ENCODE measurements at regions of chr15 and their contacts with region 1.

Region 1: GRCh38 chr15:63157118-63157843 is at the start of gene RPS27L:
- DNase-seq: peak; percentile 77
- ATAC-seq: peak; percentile 95
- H3K4me3 ChIP-seq: peak within 1 kb of the TSS; percentile 78
- H3K27ac ChIP-seq: peak within 1 kb of the TSS; percentile 96
- H3K4me1 ChIP-seq: peaks cover 10% of the 10 kb centered on the region
- H3K27me3 ChIP-seq: no peaks in the 10 kb centered on the region
- CTCF ChIP-seq: no peak
- EP300 ChIP-seq: peak; percentile 39 to 56; a peak in 2 of 4 replicates
- POLR2A ChIP-seq: peak; percentile 99
- RAD21 ChIP-seq: 0 out of 2 replicates have a peak, but pooled peaks have one; percentile 5
- polyA plus RNA-seq, gene RPS27L: 468 to 596 TPM

Region 2: DNA sequence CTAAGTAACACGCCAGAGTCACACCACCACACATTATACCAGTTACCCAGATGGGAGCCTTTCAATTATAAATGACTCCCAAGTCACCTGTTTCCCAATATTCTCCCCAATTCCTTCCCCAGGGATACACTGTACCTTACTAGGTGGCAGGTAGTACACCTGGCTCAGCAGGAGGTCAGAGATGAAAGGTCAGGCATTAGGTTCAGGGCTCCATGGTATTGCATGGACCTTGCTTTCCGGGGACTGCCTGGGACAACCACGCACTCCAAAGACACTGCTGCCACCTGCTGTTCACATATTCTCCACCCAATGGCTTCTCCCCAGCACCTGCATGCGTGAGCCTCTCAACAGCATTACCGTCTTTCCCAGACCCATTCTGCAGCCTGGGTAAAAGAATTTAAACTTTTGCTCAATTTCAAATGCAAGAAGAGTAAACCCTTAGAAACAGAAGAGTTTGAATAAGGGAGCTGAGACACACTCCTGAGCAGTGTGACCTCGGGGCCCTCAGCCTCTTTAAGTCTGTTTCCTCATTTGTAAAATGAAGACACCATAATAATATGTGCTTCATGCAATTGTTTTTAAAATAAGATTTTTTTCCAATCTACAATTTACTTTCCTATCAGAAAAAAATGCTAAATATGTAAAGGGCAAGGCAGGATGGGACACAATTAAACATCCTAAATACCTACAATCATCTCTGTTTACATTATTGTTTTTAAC is 63.6 kb before region 1 on chr15:
- CTCF ChIA-PET with region 1: no interaction called
- POLR2A ChIA-PET with region 1: no interaction called
- RAD21 ChIA-PET with region 1: no interaction called
- SMC1A ChIA-PET with region 1: no interaction called
- in situ Hi-C with region 1: no loop called
- intact Hi-C with region 1: no loop called
- DNase-seq: peak; percentile 35
- ATAC-seq: peak; percentile 99
- H3K4me3 ChIP-seq: no peak overlapping the region
- H3K27ac ChIP-seq: no peak overlapping the region
- H3K4me1 ChIP-seq: no peaks in the 10 kb centered on the region
- H3K27me3 ChIP-seq: no peaks in the 10 kb centered on the region; a peak in 2 of 4 replicates
- CTCF ChIP-seq: peak; percentile 83 to 89 (median 84)
- EP300 ChIP-seq: no peak
- POLR2A ChIP-seq: no peak
- RAD21 ChIP-seq: peak; percentile 91

Region 3: GRCh38 chr15:63122002-63122893 is 35.0 kb before region 1 on chr15:
- CTCF ChIA-PET with region 1: interaction called, 3 read pairs
- POLR2A ChIA-PET with region 1: no interaction called
- RAD21 ChIA-PET with region 1: no interaction called
- SMC1A ChIA-PET with region 1: no interaction called
- in situ Hi-C with region 1: no loop called
- intact Hi-C with region 1: loop called (anchors 5 kb)
- DNase-seq: peak; percentile 44
- ATAC-seq: peak; percentile 97
- H3K4me3 ChIP-seq: peak overlapping the region; percentile 85
- H3K27ac ChIP-seq: peak overlapping the region; percentile 50; the same call in 1 of the 2 replicates
- H3K4me1 ChIP-seq: no peaks in the 10 kb centered on the region
- H3K27me3 ChIP-seq: no peaks in the 10 kb centered on the region
- CTCF ChIP-seq: peak in 2 of 3 experiments; percentile 9 to 15; a peak in 1 of 6 replicates
- EP300 ChIP-seq: no peak
- POLR2A ChIP-seq: no peak
- RAD21 ChIP-seq: no peak

Region 4: GRCh38 chr15:63212050-63213004 is 55.0 kb after region 1 on chr15:
- CTCF ChIA-PET with region 1: interaction called, 3 read pairs
- POLR2A ChIA-PET with region 1: interaction called, 4 read pairs
- RAD21 ChIA-PET with region 1: interaction called, 3 read pairs
- SMC1A ChIA-PET with region 1: interaction called, 3 read pairs
- in situ Hi-C with region 1: no loop called
- intact Hi-C with region 1: loop called (anchors 10 kb)
- DNase-seq: peak; percentile 59
- ATAC-seq: peak; percentile 70
- H3K4me3 ChIP-seq: peak overlapping the region; percentile 62
- H3K27ac ChIP-seq: peak overlapping the region; percentile 87
- H3K4me1 ChIP-seq: peaks cover 46% of the 10 kb centered on the region
- H3K27me3 ChIP-seq: no peaks in the 10 kb centered on the region
- CTCF ChIP-seq: no peak
- EP300 ChIP-seq: peak; percentile 75 to 87
- POLR2A ChIP-seq: no peak
- RAD21 ChIP-seq: no peak

Region 5: DNA sequence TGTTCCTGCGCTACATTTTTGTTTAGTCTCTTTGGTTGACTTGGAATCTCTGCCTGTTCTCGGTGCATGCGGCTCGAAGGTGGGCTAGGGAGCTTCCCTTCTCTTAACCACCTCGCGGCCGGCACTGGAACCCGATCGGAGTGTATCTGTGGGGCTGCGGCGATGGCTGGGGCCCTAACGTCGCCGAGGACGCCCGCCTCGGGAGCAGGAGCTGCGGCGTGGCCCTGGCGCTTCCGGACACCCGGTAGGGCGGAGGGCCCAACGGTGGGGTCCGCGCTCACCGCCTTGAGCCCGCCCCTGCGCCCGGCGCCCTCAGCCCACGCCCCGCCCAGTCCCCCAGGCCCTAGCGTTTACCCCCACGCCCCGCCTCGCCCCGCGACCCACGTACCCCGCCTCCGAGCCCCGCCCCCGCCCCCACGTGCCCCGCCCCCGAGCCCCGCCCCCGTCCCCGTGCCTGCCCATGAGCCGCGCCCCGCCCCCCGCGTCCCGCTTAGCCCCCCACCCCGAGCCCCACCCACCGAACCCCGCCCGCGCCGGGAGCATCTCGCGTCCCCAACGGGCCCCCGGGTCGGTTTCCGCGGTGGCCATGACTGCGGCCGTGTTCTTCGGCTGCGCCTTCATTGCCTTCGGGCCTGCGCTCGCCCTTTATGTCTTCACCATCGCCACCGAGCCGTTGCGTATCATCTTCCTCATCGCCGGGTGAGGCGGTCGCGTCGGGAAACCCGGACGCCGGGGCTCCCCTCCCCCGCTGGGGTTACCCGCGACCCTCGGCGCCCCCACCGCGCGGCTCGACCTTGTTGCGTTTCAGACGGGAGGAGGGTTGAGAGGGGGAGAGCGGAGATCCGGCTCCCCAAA is 120.0 kb after region 1 on chr15 and contains the start of gene APH1B:
- CTCF ChIA-PET with region 1: interaction called, 3 read pairs
- POLR2A ChIA-PET with region 1: no interaction called
- RAD21 ChIA-PET with region 1: interaction called, 4 read pairs
- SMC1A ChIA-PET with region 1: interaction called, 4 read pairs
- in situ Hi-C with region 1: no loop called
- intact Hi-C with region 1: loop called (anchors 10 kb)
- DNase-seq: no peak
- ATAC-seq: peak; percentile 94
- H3K4me3 ChIP-seq: peak within 1 kb of the TSS; percentile 94
- H3K27ac ChIP-seq: peak within 1 kb of the TSS; percentile 62
- H3K4me1 ChIP-seq: peaks cover 4% of the 10 kb centered on the region; the same call in 1 of the 2 replicates
- H3K27me3 ChIP-seq: no peaks in the 10 kb centered on the region
- CTCF ChIP-seq: no peak
- EP300 ChIP-seq: no peak
- POLR2A ChIP-seq: peak; percentile 89
- RAD21 ChIP-seq: no peak
- polyA plus RNA-seq, gene APH1B: 12.9 to 17.6 TPM

Region 6: DNA sequence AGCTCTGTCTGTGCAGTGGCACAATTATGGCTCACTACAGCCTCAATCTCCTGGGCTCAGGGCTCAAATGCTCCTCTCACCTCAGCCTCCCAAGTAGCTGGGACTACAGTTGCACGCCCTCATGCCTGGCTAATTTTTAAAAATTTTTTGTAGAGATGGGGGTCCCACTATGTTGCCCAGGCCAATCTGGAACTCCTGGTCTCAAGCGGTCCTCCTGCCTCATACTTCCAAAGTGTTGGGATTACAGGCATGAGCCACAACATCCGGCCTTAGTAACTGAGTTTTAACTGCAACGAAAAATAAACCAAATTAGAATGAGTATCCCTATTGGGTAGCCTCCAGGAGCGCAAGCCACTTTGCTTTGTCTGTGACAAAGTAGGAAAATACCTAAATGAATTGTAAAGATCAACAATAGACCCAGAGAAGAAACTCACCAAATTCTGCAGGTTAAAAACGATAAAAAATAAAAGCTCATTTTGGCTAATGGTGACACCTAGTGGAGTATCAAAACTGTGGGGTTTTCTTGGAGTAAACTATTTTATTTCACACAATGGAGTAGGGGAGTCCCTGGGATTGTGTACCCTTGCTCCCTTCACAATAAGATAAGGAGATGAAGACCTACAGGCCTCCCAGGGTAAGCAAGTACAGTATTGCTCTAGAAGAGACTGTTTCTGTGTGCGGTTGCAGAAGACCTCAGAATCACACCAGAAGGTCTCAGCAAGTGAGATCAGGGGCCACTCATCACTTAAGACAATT is 245.4 kb after region 1 on chr15:
- CTCF ChIA-PET with region 1: interaction called, 5 read pairs
- POLR2A ChIA-PET with region 1: interaction called, 3 read pairs
- RAD21 ChIA-PET with region 1: no interaction called
- SMC1A ChIA-PET with region 1: no interaction called
- in situ Hi-C with region 1: no loop called
- intact Hi-C with region 1: loop called (anchors 10 kb)
- DNase-seq: no peak
- ATAC-seq: peak; percentile 73
- H3K4me3 ChIP-seq: no peak overlapping the region
- H3K27ac ChIP-seq: no peak overlapping the region
- H3K4me1 ChIP-seq: no peaks in the 10 kb centered on the region
- H3K27me3 ChIP-seq: no peaks in the 10 kb centered on the region
- CTCF ChIP-seq: peak; percentile 44 to 60 (median 56); a peak in 5 of 6 replicates
- EP300 ChIP-seq: no peak
- POLR2A ChIP-seq: no peak
- RAD21 ChIP-seq: peak; percentile 82